ENCODE measurements at regions of chr2 and their contacts with region 1.

Region 1: DNA sequence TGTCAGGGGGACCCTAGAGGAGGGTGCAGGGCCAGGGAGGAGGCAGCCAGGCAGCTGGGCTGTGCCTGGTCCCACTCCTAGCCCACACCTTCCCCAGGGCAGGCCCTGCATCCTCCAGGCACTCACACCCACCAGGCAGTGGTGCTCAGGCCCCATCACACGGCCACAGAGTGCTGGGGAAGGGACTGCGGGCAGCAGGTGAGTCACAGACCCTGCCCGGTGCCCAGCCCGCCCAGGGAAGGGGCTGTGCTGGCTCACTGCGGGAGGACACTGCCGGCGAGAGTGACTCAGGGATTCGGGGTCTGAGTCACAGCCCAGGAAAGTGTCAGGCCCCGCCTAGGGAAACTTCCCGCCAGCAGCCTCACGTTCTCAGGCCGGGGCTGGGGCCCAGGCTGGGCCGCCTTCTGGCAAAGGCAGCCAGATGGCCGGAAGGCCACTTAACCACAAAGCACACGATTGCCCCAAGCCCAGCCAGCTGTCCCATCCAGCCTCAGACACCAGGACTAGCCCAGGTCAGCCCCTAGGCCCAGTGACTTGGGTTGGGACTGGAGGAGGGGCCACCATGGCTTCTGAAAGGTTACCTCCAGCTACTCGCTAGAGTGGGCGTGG is 42.2 kb downstream of the BIN1 start:
- DNase-seq: peak; percentile 90
- ATAC-seq: peak; percentile 89
- H3K4me3 Mint-ChIP-seq: no peak overlapping the region
- H3K27ac Mint-ChIP-seq: peak overlapping the region; percentile 86
- H3K4me1 Mint-ChIP-seq: peaks cover 34% of the 10 kb centered on the region
- H3K27me3 Mint-ChIP-seq: no peaks in the 10 kb centered on the region
- CTCF ChIP-seq: no peak

Region 2: DNA sequence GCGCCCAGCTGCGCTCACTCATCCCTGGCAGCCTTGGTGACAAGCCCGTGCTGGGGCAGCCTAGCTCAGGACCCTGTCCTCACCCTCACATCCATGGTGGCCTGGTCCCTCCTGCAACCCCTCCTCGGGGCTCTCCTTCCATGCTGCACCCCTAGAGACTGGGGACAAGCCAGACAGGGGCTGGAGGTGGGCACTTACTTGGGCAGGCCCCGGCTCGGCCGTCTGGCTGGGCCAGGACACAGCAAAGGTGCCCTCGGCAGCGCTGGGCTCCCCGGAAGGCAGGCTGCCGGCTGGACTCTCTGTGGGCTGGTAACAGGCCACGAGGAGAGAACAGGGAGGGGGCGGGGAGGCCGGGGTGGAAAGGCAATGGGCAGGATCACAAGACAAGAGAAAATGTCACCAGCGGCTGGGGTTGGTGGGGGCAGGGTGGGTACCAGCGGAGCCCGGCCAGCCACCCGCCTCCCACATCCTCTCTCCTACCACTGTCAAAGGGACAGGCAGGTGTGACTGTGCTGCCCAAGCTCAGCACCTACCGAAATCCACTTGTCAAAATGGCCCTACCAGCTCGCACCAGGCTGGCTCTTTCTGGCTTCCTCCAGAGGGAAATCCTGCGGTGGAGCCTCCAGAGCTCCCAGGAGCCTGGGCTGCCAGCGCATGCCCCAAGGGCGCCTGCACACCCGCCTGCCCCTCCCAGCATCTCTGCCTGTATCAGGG is 12.5 kb before region 1 on chr2:
- CTCF ChIA-PET with region 1: interaction called, 12 read pairs
- POLR2A ChIA-PET with region 1: interaction called, 7 read pairs
- intact Hi-C with region 1: no loop called
- DNase-seq: no peak
- ATAC-seq: no peak
- H3K4me3 Mint-ChIP-seq: no peak overlapping the region
- H3K27ac Mint-ChIP-seq: no peak overlapping the region
- H3K4me1 Mint-ChIP-seq: peaks cover 2% of the 10 kb centered on the region
- H3K27me3 Mint-ChIP-seq: no peaks in the 10 kb centered on the region
- CTCF ChIP-seq: no peak

Region 3: DNA sequence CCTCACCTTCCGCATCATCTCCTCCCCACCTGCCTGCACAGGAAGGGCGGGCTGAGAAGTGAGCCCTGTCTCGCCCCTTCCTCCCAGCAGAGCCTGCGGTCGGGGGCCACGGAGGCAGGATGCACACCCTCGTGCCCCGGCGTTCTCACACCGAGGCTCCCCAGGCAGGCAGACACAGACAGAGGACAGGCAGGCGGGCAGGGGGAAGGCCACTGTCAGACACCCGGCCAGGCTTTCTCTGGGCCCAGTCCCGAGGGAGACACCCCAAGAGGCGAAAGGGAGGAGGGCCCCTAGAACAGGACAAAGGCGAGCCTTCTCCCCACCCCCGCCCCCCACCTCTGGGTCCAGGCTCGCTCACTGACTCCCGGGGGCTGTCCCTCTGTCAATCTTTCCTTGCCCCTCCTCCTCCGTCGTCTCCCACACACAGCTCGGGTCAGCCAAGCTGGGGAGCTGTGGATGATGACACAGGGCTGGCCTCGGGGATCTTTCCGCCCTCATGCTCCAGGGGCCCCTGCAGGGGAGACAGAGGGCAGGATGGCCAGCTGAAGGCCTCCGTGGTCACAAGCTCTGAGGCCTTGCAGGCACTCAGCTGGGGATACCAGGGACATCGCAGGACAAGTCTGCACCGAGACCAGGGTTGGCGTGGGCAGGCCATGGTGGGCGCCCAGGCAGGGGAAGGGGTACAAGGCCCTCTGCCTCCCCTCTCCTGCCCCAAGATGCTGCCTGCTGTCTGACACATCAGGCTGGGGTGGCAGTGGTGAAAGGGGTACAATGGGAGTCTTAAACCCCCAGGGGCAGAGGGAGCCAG is 17.3 kb after region 1 on chr2:
- CTCF ChIA-PET with region 1: interaction called, 64 read pairs
- POLR2A ChIA-PET with region 1: interaction called, 55 read pairs
- intact Hi-C with region 1: no loop called
- DNase-seq: peak; percentile 92
- ATAC-seq: peak; percentile 57
- H3K4me3 Mint-ChIP-seq: peak overlapping the region; percentile 86
- H3K27ac Mint-ChIP-seq: peak overlapping the region; percentile 92
- H3K4me1 Mint-ChIP-seq: peaks cover 80% of the 10 kb centered on the region
- H3K27me3 Mint-ChIP-seq: no peaks in the 10 kb centered on the region
- CTCF ChIP-seq: no peak

Region 4: GRCh38 chr2:127106951-127107621 is 42.3 kb after region 1 on chr2 and contains the start of gene BIN1:
- CTCF ChIA-PET with region 1: interaction called, 12 read pairs
- POLR2A ChIA-PET with region 1: no interaction called
- intact Hi-C with region 1: no loop called
- DNase-seq: peak; percentile 71
- ATAC-seq: peak; percentile 86
- H3K4me3 Mint-ChIP-seq: peak within 1 kb of the TSS; percentile 73
- H3K27ac Mint-ChIP-seq: no peak within 1 kb of the TSS
- H3K4me1 Mint-ChIP-seq: peaks cover 5% of the 10 kb centered on the region
- H3K27me3 Mint-ChIP-seq: peaks cover 8% of the 10 kb centered on the region
- CTCF ChIP-seq: no peak
- total RNA-seq, gene BIN1: 95.2 to 102 TPM

Region 5: DNA sequence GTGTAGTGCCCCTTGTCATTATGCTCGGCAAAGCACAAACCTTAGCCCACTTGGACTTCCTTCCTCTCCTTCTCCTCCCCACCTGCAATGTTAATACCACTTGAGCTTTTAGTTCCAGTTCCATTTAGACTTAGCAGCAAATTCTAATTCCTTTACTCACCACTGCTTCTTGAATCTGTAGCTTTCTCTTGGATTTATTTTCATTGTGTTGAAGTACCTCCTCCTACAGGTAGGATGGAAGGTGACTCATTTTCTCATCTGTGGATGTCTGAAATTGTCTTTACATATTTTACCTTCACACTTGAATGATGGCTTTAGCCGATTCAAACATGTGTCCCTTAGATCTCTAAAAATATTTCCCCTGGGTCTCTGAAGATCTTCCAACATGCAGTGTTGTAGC is 75.0 kb after region 1 on chr2:
- CTCF ChIA-PET with region 1: interaction called, 17 read pairs
- POLR2A ChIA-PET with region 1: no interaction called
- intact Hi-C with region 1: no loop called
- DNase-seq: no peak
- ATAC-seq: no peak
- H3K4me3 Mint-ChIP-seq: no peak overlapping the region
- H3K27ac Mint-ChIP-seq: no peak overlapping the region
- H3K4me1 Mint-ChIP-seq: no peaks in the 10 kb centered on the region
- H3K27me3 Mint-ChIP-seq: no peaks in the 10 kb centered on the region
- CTCF ChIP-seq: no peak

Measured in activated CD8-positive, alpha-beta T cell treated with anti-CD3 and anti-CD28 coated beads for 36 hours (primary cell).